ENCODE measurements at regions of chr7 and their contacts with region 1.

Region 1: DNA sequence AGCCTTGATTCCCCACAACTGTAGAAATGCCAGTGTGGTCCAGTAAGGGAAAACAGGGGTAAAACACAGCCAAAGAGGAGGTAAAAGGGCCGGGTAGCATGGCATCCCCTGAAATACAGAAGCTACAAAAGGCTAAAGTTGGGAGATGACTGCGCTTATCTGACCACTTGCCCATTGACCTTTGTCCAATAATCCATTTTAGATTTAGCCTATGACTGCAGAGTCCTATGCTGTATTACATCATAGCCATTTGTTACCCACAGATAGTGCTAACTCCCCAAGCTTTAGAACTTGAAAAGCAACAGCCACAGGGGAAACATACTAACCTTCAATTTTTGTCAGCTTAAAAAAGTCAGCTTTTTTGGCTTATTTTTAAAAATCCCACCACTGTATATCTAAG is 26.2 kb downstream of the MTPN start:
- DNase-seq: no peak
- H3K4me3 ChIP-seq: no peak overlapping the region
- H3K4me3 Mint-ChIP-seq: no peak overlapping the region
- H3K27ac ChIP-seq: no peak overlapping the region
- H3K27ac Mint-ChIP-seq: no peak overlapping the region
- H3K4me1 ChIP-seq: peaks cover 17% of the 10 kb centered on the region
- H3K4me1 Mint-ChIP-seq: peaks cover 41 to 74% (median 45%) of the 10 kb centered on the region in 4 donors
- H3K27me3 ChIP-seq: no peaks in the 10 kb centered on the region
- H3K27me3 Mint-ChIP-seq: no peaks in the 10 kb centered on the region

Region 2: DNA sequence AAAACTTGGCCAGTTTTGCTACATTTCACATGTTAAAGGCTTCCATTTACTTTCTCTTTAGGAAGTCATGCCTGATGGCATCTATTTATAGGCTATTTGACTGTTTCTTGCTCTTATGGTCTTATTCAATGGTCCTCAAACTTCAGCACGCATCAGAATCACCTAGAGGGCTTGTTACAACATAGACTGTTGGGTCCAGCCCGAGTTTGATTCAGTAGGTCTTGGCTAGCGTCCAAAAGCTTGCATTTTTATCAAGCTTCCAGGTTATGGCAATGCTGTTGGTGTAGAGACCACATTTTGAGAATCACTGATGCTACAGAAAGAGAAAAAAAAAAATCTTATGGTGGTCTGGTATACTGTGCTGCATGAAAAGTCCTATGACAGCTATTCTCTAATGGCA is 25.8 kb before region 1 on chr7:
- CTCF ChIA-PET with region 1: no interaction called
- POLR2A ChIA-PET with region 1: no interaction called
- intact Hi-C with region 1: no loop called
- DNase-seq: no peak
- H3K4me3 ChIP-seq: no peak overlapping the region
- H3K4me3 Mint-ChIP-seq: no peak overlapping the region
- H3K27ac ChIP-seq: no peak overlapping the region
- H3K27ac Mint-ChIP-seq: no peak overlapping the region
- H3K4me1 ChIP-seq: peaks cover 8% of the 10 kb centered on the region
- H3K4me1 Mint-ChIP-seq: peaks cover 6 to 9% (median 7%) of the 10 kb centered on the region in 4 donors
- H3K27me3 ChIP-seq: no peaks in the 10 kb centered on the region
- H3K27me3 Mint-ChIP-seq: no peaks in the 10 kb centered on the region

Region 3: GRCh38 chr7:135965602-135966001 is 14.6 kb after region 1 on chr7:
- CTCF ChIA-PET with region 1: interaction called, 3 read pairs
- POLR2A ChIA-PET with region 1: interaction called, 3 read pairs
- intact Hi-C with region 1: loop called (anchors 2 kb)
- DNase-seq: no peak
- H3K4me3 ChIP-seq: no peak overlapping the region
- H3K4me3 Mint-ChIP-seq: peak overlapping the region in 4 of 8 donors; percentile 9 to 68 (median 39)
- H3K27ac ChIP-seq: no peak overlapping the region
- H3K27ac Mint-ChIP-seq: peak overlapping the region in 1 of 7 donors; percentile 46
- H3K4me1 ChIP-seq: peaks cover 76% of the 10 kb centered on the region
- H3K4me1 Mint-ChIP-seq: peaks cover 52 to 87% (median 71%) of the 10 kb centered on the region in 4 donors
- H3K27me3 ChIP-seq: no peaks in the 10 kb centered on the region
- H3K27me3 Mint-ChIP-seq: no peaks in the 10 kb centered on the region

Measured in CD4-positive, alpha-beta memory T cell (primary cell).